Motor neuron (in vitro differentiated cells): ENCODE measurements at regions of chr18 and their contacts with region 1.

Region 1: DNA sequence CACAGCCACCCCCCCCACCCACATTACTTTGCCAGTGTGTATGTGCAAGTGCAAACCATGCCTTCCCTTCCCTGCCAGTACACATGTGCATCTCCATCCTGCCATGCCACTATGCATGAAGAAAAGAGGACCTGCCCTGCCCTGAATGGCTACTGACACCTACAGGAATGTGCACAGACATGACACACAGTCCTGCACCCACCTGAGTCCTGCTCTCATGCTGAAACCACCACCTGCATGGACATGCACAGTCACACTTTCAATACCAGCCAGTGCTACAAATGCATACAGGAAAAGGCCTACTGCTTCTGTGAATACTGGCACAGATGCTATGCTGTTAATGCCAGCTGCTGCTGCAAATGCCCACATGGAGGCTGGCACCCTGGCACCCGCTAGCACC is 334.4 kb upstream of the DLGAP1 start:
- ATAC-seq: no peak
- H3K4me3 ChIP-seq: no peak overlapping the region
- H3K27ac ChIP-seq: no peak overlapping the region
- H3K4me1 ChIP-seq: no peaks in the 10 kb centered on the region

Region 2: DNA sequence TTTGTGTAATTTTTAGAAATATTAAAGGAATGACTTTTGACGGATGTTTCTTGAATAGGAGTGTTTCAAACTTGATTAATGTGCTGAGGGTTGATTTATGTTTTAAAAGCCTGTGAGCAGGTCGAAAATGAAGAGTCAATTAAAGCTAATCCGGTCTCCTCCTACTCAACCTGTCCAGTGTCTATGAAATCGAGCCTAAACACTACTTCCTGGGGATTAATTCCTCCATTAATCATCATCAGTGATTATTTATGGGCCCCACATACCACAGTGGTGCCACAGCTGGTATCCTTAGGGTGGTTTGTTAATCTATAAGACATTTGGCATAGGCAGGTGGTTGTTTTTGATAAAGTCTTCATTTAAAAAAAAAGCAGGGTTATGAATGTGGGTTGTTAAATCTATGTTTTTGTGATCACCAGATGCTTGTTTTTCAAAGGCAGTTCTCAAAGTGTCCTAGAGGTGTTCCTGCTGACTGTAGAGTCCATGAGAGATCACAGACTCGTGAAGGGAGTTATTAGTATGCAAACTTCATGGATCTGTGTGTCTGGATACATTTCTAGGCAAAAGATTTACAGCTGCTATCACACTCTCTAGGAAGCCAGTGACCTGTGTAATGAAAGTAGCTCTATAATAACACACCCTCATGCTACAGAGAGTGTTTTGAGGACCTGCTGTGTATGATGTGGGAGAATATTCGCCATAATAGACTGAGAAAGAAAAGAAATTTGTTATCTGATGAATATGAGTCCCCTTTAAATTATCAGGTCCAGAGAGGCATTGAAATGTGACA is 98.9 kb after region 1 on chr18:
- in situ Hi-C with region 1: loop called in 1 of 9 experiments (anchors 25 kb)
- ATAC-seq: peak in 5 of 8 experiments; percentile 82 to 97 (median 94)
- H3K4me3 ChIP-seq: no peak overlapping the region
- H3K27ac ChIP-seq: no peak overlapping the region
- H3K4me1 ChIP-seq: peaks cover 3 to 12% of the 10 kb centered on the region in 2 donors